Panc1 (cell line): ENCODE measurements at regions of chr12 and their contacts with region 1.

Region 1: GRCh38 chr12:78120866-78121560 is 290.3 kb downstream of the NAV3 start:
- DNase-seq: no peak
- ATAC-seq: no peak
- H3K4me3 ChIP-seq: no peak overlapping the region
- H3K27ac ChIP-seq: no peak overlapping the region
- H3K4me1 ChIP-seq: no peaks in the 10 kb centered on the region
- H3K27me3 ChIP-seq: no peaks in the 10 kb centered on the region
- CTCF ChIP-seq: peak; percentile 36; the same call in 1 of the 2 replicates

Region 2: GRCh38 chr12:77720258-77720657 is 400.8 kb before region 1 on chr12:
- CTCF ChIA-PET with region 1: no interaction called
- POLR2A ChIA-PET with region 1: no interaction called
- in situ Hi-C with region 1: no loop called
- intact Hi-C with region 1: no loop called
- DNase-seq: no peak
- ATAC-seq: no peak
- H3K4me3 ChIP-seq: no peak overlapping the region
- H3K27ac ChIP-seq: no peak overlapping the region
- H3K4me1 ChIP-seq: no peaks in the 10 kb centered on the region
- H3K27me3 ChIP-seq: no peaks in the 10 kb centered on the region
- CTCF ChIP-seq: peak; percentile 26; the same call in 1 of the 2 replicates

Region 3: DNA sequence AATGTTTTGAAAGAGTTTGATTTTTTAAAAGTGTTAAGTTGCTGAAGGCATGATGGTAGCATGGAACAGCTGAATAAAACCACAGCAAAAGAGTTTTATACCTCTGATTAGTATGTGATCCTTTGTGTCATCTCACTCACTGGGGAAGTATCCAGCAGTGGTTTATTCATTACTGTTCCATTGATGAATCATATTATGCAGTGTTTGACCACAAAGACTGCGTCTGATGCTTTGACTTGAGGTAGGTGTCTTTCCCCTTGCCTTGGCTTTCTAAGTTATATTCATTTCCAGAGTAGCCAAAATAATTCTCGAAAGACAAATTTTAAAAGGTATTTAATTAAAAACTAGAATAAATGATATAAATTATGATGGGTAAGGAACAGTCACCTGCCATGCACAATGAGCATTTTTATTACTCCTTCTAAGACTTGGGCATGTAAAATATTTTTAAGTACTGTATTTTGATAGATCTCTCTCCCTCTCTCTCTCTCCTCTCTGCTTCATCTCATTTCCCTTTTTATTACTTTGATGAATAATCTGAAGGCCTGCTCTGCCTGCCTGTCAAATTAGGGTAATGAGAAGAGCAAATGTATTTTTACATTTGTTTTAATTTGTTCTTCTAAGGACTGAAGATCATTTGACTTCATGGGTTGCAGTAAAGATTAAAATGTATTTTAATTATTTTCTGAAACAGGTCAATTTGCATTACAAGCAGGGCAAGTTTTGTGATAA is 125.4 kb before region 1 on chr12:
- CTCF ChIA-PET with region 1: no interaction called
- POLR2A ChIA-PET with region 1: no interaction called
- in situ Hi-C with region 1: no loop called
- intact Hi-C with region 1: loop called (anchors 1 kb)
- DNase-seq: peak; percentile 27
- ATAC-seq: peak; percentile 56; the same call in 1 of the 2 replicates
- H3K4me3 ChIP-seq: no peak overlapping the region
- H3K27ac ChIP-seq: no peak overlapping the region
- H3K4me1 ChIP-seq: no peaks in the 10 kb centered on the region
- H3K27me3 ChIP-seq: no peaks in the 10 kb centered on the region
- CTCF ChIP-seq: no peak